Right ventricle myocardium inferior (tissue), 1 donor: ENCODE measurements at regions of chr2 and their contacts with region 1.

Region 1: DNA sequence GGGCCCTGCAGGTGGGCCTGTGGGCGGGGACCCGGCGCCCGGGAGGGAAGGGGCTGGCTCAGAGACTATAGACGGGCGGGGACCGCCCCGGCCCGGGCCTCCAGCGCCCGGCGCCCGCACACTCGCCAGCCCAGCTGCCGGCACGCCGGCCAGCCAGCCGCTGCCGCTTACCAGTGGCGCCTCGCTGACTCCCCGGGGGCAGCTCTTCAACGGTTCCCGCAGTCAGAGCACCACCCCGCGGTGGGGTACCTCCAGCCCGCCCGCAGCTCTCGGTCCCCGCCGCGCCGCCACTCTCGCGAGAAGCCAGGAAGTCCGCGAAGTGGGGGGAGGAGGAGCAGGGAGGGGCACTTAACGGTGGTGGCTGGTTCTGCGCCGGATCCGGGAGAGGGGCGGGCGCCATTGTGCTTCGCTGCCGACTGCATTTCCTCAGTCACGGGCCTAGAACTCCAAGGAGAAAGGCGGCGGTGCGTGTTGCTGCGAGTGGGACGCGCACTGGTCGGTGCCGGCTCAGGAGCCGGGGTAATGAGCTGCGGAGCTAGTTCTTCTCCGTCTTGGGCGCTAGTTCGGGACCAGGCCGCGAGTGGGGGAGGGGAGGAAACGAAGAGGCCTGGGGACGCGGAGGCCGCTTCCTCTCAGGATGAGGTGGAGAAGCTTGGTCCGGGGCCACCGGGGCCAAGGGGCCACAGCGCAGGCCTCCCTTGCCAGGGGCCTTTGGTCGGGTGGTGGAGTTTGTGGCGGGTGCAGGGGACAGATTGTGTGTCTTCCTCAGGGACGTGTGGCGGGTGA is at the start of gene MARCHF7:
- DNase-seq: peak; percentile 99
- ATAC-seq: peak; percentile 99
- total RNA-seq, gene MARCHF7: 79.3 TPM

Region 2: GRCh38 chr2:159615140-159615951 is 97.0 kb before region 1 on chr2:
- intact Hi-C with region 1: loop called (anchors 1 kb)
- DNase-seq: peak; percentile 94
- ATAC-seq: peak; percentile 97

Region 3: GRCh38 chr2:159755788-159756187 is 43.5 kb after region 1 on chr2:
- intact Hi-C with region 1: loop called (anchors 5 kb)
- DNase-seq: no peak
- ATAC-seq: no peak

Region 4: GRCh38 chr2:159785195-159785594 is 72.9 kb after region 1 on chr2:
- intact Hi-C with region 1: no loop called
- DNase-seq: no peak
- ATAC-seq: no peak

Region 5: DNA sequence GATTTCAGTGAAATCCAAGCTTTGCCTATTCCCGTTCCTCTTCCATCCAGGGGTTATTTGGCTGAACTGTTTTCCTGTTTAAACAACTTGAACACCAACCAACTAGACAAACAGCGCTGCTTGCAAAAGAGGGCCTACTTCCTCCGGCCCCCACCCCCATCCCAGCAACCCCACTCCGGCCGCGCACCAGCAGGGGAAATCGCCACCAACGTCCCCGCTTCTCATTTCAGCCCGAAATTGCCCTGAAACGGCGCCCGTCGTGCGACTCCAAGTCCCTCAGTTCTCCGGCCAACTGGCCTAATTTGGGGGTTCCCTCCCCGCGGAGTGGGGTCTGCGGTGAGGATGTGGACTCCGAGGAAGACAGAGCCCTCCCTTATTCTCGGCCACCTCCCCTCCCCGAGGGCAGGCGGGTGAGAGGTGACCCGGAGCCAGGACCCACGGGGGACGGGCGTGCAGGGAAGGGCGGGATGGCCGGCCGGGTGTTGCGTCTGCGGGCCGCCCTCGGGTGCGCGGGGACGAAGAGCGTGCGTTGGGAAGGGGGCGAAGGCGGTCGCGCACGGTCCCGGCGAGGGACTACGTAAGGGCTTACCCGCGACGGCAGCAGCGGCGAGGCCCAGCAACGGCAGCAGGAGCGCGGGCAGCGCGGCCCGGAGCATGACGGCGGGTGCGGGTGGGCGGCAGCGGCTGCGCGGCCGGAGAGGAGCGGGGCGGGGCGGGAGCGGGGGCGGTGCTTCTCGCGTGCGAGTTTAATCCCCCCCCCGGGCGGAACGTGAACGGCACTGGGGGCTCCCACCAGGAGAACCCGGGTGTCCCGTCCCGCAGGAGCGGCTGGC is 85.4 kb after region 1 on chr2 and contains the start of gene CD302:
- intact Hi-C with region 1: loop called (anchors 2 kb)
- DNase-seq: peak; percentile 92
- ATAC-seq: peak; percentile 87
- total RNA-seq, gene CD302: 21.9 TPM

Region 6: DNA sequence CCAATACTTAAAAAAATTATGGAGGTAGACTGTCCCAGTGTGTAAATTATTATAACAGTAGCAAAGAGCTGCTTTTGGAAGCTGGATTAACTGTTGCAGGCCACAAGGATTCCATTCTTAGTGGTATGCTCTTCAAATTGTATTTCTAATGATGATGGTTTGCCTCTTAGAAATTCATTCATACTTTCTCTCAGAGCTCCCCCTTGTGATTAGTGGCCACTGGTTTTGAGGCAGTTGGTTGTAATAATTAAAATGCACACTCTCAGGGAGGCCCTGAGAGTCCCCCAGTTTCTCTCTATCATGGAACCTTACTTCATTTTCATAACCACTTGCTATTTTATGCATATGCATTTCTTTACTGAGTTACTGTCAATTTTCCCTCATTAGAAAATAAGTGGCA is 227.6 kb after region 1 on chr2:
- intact Hi-C with region 1: loop called (anchors 10 kb)
- DNase-seq: no peak
- ATAC-seq: no peak